Naive thymus-derived CD8-positive, alpha-beta T cell (primary cell): ENCODE measurements at regions of chr6 and their contacts with region 1.

Region 1: GRCh38 chr6:45663551-45664221 is 286.0 kb upstream of the SUPT3H start:
- DNase-seq: peak in 9 of 10 donors; percentile 12 to 71 (median 43)
- ATAC-seq: peak; percentile 89 to 95
- H3K4me3 Mint-ChIP-seq: peak overlapping the region; percentile 4 to 83 (median 72)
- H3K27ac Mint-ChIP-seq: peak overlapping the region in 1 of 10 donors; percentile 46
- H3K4me1 Mint-ChIP-seq: peaks cover 21 to 48% (median 28%) of the 10 kb centered on the region in 4 donors
- H3K27me3 Mint-ChIP-seq: peaks cover 5 to 31% (median 15%) of the 10 kb centered on the region in 5 donors

Region 2: DNA sequence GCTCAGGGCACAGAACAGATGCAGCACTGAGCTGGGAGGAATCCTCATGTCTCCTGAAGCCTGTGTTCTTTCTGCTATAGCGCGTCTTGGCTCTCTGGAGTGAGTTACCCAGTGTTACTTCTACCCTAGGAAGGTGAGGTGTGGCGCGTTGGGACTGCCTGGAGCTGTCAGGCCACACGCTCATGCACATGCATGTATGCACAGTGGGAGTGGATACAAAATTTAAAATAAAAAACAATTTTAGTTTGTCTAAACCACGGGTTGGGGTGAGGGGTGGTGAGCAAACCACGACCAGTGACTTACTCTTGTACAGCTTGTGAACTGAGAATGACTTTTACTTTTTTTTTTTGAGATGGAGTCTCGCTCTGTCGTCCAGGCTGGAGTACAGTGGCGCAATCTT is 12.7 kb after region 1 on chr6:
- POLR2A ChIA-PET with region 1: interaction called, 10 read pairs
- DNase-seq: no peak
- ATAC-seq: no peak
- H3K4me3 Mint-ChIP-seq: peak overlapping the region in 6 of 10 donors; percentile 6 to 88 (median 43)
- H3K27ac Mint-ChIP-seq: peak overlapping the region in 5 of 10 donors; percentile 33 to 72 (median 65)
- H3K4me1 Mint-ChIP-seq: peaks cover 22 to 45% (median 36%) of the 10 kb centered on the region in 4 donors
- H3K27me3 Mint-ChIP-seq: no peaks in the 10 kb centered on the region

Region 3: GRCh38 chr6:45854149-45854742 is 190.6 kb after region 1 on chr6:
- POLR2A ChIA-PET with region 1: no interaction called
- DNase-seq: no peak
- ATAC-seq: no peak
- H3K4me3 Mint-ChIP-seq: no peak overlapping the region
- H3K27ac Mint-ChIP-seq: no peak overlapping the region
- H3K4me1 Mint-ChIP-seq: no peaks in the 10 kb centered on the region
- H3K27me3 Mint-ChIP-seq: peaks cover 2 to 13% (median 8%) of the 10 kb centered on the region in 5 donors